ENCODE measurements at regions of chr3 and their contacts with region 1.

Region 1: DNA sequence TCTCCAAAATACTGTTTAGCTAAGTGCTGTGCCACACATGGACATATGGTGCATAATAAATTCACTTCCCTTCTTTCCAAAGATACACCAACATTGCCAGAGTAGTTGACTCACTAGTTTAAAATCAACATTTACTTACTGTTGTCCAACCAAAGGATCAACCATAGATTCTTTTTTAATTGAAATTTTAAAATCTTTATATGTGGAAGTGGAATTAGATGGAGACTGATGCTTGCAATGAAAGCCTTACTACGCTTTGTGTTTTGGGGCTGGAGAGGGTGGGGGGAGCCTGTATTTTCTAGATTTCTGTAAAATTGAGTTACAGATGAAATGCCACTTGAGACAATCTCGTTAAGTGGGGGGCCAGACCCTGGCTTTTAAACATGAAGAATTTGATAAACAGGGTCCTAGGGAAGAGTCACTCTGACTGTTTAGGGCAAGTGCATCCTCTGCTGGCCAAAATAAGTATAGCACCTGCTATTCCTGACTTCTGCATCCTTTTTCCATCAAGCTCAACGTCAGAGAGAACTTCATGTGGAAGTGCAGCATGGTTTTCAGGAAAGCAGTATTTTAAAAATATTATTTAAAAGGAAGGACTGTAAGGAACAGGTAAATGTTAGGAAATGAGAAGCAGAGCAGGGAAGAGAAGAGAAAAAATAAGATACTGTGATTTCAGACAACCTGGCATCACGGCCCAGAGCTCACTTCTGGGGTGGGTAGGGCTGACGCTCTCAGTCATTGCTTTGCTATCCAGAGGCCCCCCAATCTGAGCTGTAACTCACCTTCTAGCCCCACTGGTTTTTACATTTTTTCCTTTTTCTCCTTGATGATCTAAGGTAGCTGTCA is 76.7 kb downstream of the BOC start:
- DNase-seq: peak in 6 of 9 donors; percentile 9 to 57 (median 40)
- ATAC-seq: peak; percentile 60
- H3K4me3 ChIP-seq: no peak overlapping the region
- H3K4me3 Mint-ChIP-seq: no peak overlapping the region
- H3K27ac ChIP-seq: no peak overlapping the region
- H3K27ac Mint-ChIP-seq: no peak overlapping the region
- H3K4me1 ChIP-seq: no peaks in the 10 kb centered on the region
- H3K4me1 Mint-ChIP-seq: peaks cover 0 to 4% (median 0%) of the 10 kb centered on the region in 7 donors
- H3K27me3 ChIP-seq: no peaks in the 10 kb centered on the region
- H3K27me3 Mint-ChIP-seq: no peaks in the 10 kb centered on the region

Region 2: DNA sequence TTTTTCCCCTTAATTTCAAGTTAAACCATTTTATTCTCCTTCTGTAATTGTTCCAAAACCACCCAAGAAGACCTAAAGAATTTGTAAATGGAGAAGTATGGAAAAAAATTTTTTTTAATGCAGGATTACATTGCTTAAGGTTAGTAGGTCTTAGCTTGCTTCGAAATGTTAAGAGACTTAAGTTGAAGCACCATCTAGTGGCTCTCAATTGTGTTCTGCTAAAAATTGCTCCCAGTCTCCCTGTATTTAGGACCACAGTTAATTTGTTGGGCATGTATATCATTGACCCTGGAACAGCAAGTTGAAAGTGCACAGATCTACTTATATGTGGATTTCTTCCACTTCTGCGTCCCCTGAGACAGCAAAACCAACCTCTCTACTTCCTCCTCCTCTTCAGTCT is 473.8 kb before region 1 on chr3:
- CTCF ChIA-PET with region 1: no interaction called
- POLR2A ChIA-PET with region 1: no interaction called
- intact Hi-C with region 1: loop called in 1 of 2 experiments (anchors 1 kb)
- DNase-seq: no peak
- ATAC-seq: no peak
- H3K4me3 ChIP-seq: no peak overlapping the region
- H3K4me3 Mint-ChIP-seq: no peak overlapping the region
- H3K27ac ChIP-seq: no peak overlapping the region
- H3K27ac Mint-ChIP-seq: no peak overlapping the region
- H3K4me1 ChIP-seq: no peaks in the 10 kb centered on the region
- H3K4me1 Mint-ChIP-seq: peaks cover 18 to 28% (median 23%) of the 10 kb centered on the region in 7 donors
- H3K27me3 ChIP-seq: no peaks in the 10 kb centered on the region
- H3K27me3 Mint-ChIP-seq: peaks cover 0 to 3% (median 0%) of the 10 kb centered on the region in 5 donors

Region 3: GRCh38 chr3:112948346-112948838 is 339.6 kb before region 1 on chr3:
- CTCF ChIA-PET with region 1: no interaction called
- POLR2A ChIA-PET with region 1: no interaction called
- intact Hi-C with region 1: no loop called
- DNase-seq: no peak
- ATAC-seq: no peak
- H3K4me3 ChIP-seq: no peak overlapping the region
- H3K4me3 Mint-ChIP-seq: no peak overlapping the region
- H3K27ac ChIP-seq: no peak overlapping the region
- H3K27ac Mint-ChIP-seq: peak overlapping the region in 8 of 9 donors; percentile 16 to 80 (median 54)
- H3K4me1 ChIP-seq: no peaks in the 10 kb centered on the region
- H3K4me1 Mint-ChIP-seq: peaks cover 0 to 53% (median 27%) of the 10 kb centered on the region in 7 donors
- H3K27me3 ChIP-seq: no peaks in the 10 kb centered on the region
- H3K27me3 Mint-ChIP-seq: no peaks in the 10 kb centered on the region

Region 4: GRCh38 chr3:113194823-113195401 is 93.1 kb before region 1 on chr3:
- CTCF ChIA-PET with region 1: no interaction called
- POLR2A ChIA-PET with region 1: no interaction called
- intact Hi-C with region 1: no loop called
- DNase-seq: no peak
- ATAC-seq: no peak
- H3K4me3 ChIP-seq: no peak overlapping the region
- H3K4me3 Mint-ChIP-seq: no peak overlapping the region
- H3K27ac ChIP-seq: no peak overlapping the region
- H3K27ac Mint-ChIP-seq: no peak overlapping the region
- H3K4me1 ChIP-seq: no peaks in the 10 kb centered on the region
- H3K4me1 Mint-ChIP-seq: no peaks in the 10 kb centered on the region
- H3K27me3 ChIP-seq: no peaks in the 10 kb centered on the region
- H3K27me3 Mint-ChIP-seq: peaks cover 0 to 8% (median 0%) of the 10 kb centered on the region in 5 donors